GM23248 (cell line): ENCODE measurements at regions of chr6 and their contacts with region 1.

Region 1: DNA sequence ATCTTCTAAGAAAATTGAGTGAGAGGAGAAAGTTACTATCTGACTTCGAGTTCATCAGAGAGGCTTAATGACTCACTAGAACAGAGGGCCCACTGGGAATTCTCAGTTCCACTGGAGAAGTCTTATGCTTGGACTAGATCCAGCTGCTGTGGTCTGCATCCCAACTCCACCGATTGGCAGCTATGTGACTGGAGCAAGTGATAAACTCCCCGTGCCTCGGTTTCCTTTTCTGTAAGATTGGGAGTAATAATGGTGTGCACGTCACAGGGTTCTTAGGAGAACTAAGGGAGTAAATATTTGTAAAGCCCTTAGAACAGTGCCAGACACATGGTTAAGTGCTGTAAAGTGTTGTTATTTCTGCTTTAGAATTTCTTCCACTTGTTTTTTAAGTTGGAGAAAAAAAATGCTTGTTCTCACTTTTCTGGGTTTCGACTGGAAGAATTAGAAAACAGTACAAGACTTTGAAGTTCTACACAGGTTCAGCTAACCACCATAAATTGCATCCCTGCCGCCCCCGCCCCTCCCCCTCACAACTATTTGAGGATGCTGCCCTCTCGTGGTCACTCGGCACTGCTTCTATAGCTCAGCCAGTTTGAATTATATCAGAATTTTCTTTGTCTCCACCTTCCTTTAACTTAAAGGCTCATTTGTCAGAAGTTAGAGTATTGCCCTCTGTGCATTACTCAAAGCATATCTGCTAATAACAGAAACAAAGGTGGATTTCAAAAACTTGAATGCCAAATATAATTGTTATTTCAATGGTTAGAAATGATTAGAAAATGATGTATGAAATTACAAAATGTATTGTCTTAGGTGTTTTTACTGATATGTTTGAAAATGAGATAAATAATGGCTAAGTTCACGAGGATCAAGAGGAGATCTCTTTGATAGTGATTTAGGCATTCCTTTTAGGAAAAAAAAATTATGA is 95.0 kb upstream of the IFNGR1 start:
- DNase-seq: peak; percentile 83
- H3K4me3 ChIP-seq: peak overlapping the region; percentile 51
- H3K27ac ChIP-seq: no peak overlapping the region
- H3K4me1 ChIP-seq: 0 out of 2 replicates have a peak, but pooled peaks cover 9% of the 10 kb centered on the region
- H3K27me3 ChIP-seq: 0 out of 2 replicates have a peak, but pooled peaks cover 4% of the 10 kb centered on the region

Region 2: GRCh38 chr6:137094411-137095008 is 219.7 kb before region 1 on chr6:
- in situ Hi-C with region 1: loop called (anchors 10 kb)
- DNase-seq: peak; percentile 75
- H3K4me3 ChIP-seq: no peak overlapping the region
- H3K27ac ChIP-seq: no peak overlapping the region
- H3K4me1 ChIP-seq: no peaks in the 10 kb centered on the region
- H3K27me3 ChIP-seq: no peaks in the 10 kb centered on the region